HepG2 (cell line): ENCODE measurements at regions of chr18 and their contacts with region 1.

Region 1: DNA sequence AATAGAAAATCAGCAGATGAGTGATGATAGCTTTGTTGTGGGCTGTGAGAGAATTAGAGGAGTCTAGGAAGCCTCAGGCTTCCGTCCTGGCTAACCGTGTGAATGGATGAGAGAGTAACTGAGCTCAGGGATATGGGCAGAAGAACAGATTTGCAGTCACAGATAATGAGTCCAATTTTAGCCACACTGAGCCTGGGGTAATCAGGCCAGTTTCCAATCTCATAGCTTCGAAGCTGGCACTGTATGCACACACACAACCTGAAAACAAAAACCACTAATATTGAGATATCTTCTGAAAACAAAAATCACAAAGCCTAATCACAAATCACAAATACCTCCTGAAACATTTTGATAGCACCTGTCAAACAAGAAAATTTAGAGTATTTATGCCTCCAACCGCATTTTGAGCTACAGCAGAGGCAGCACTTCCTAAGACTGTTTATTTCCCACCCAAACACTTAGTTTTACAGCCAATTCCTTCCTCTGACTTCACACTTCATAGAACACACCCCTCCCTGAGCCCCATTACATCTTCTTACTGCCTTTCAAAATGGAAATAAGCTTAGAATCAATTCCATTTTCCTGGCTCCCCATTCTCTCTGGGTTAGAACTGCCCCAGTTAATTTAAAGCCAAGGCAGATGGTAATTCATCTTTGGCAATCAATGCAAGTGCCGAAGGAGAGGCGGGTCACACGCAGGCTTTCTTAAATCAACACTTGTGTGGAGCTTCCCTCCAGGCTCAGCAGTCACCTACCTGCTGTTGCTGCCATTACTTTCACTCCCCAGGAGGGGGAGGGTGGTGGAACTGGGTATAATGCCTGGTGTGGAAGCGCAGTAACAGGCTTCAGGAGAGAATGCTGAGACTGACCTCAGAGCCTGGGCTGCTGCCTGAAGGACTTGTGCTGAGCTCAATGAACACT is 18.9 kb downstream of the TTR start:
- DNase-seq: peak; percentile 61
- ATAC-seq: peak; percentile 92
- H3K4me3 ChIP-seq: no peak overlapping the region
- H3K27ac ChIP-seq: no peak overlapping the region
- H3K4me1 ChIP-seq: peaks cover 81% of the 10 kb centered on the region
- H3K27me3 ChIP-seq: no peaks in the 10 kb centered on the region
- CTCF ChIP-seq: peak; percentile 50
- EP300 ChIP-seq: no peak
- POLR2A ChIP-seq: no peak
- RAD21 ChIP-seq: peak; percentile 19; the same call in 1 of the 2 replicates

Region 2: GRCh38 chr18:31206787-31207381 is 403.7 kb before region 1 on chr18:
- CTCF ChIA-PET with region 1: no interaction called
- POLR2A ChIA-PET with region 1: no interaction called
- in situ Hi-C with region 1: no loop called
- intact Hi-C with region 1: no loop called
- DNase-seq: peak; percentile 86
- ATAC-seq: peak; percentile 90
- H3K4me3 ChIP-seq: peak overlapping the region; percentile 55 to 67 (median 59)
- H3K27ac ChIP-seq: no peak overlapping the region
- H3K4me1 ChIP-seq: peaks cover 65% of the 10 kb centered on the region
- H3K27me3 ChIP-seq: no peaks in the 10 kb centered on the region; a peak in 1 of 5 replicates
- CTCF ChIP-seq: peak; percentile 48
- EP300 ChIP-seq: 0 out of 4 replicates have a peak, but pooled peaks of 1 of the 2 experiments have one; percentile 8
- POLR2A ChIP-seq: peak; percentile 45 to 46; a peak in 2 of 4 replicates
- RAD21 ChIP-seq: no peak

Region 3: GRCh38 chr18:31648966-31649429 is 38.5 kb after region 1 on chr18:
- CTCF ChIA-PET with region 1: no interaction called
- POLR2A ChIA-PET with region 1: no interaction called
- in situ Hi-C with region 1: no loop called
- intact Hi-C with region 1: no loop called
- DNase-seq: peak; percentile 13
- ATAC-seq: peak; percentile 71
- H3K4me3 ChIP-seq: no peak overlapping the region
- H3K27ac ChIP-seq: no peak overlapping the region
- H3K4me1 ChIP-seq: peaks cover 35% of the 10 kb centered on the region
- H3K27me3 ChIP-seq: no peaks in the 10 kb centered on the region
- CTCF ChIP-seq: no peak
- EP300 ChIP-seq: no peak
- POLR2A ChIP-seq: no peak
- RAD21 ChIP-seq: no peak

Region 4: GRCh38 chr18:31722369-31722957 is 111.9 kb after region 1 on chr18:
- CTCF ChIA-PET with region 1: no interaction called
- POLR2A ChIA-PET with region 1: no interaction called
- in situ Hi-C with region 1: no loop called
- intact Hi-C with region 1: loop called (anchors 2 kb)
- DNase-seq: peak; percentile 69
- ATAC-seq: peak; percentile 96
- H3K4me3 ChIP-seq: no peak overlapping the region
- H3K27ac ChIP-seq: no peak overlapping the region
- H3K4me1 ChIP-seq: no peaks in the 10 kb centered on the region
- H3K27me3 ChIP-seq: peaks cover 0 to 18% of the 10 kb centered on the region in 2 experiments; a peak in 3 of 5 replicates
- CTCF ChIP-seq: peak; percentile 84
- EP300 ChIP-seq: no peak
- POLR2A ChIP-seq: no peak
- RAD21 ChIP-seq: no peak